ENCODE measurements at regions of chr18 and their contacts with region 1.

Region 1: GRCh38 chr18:41737218-41737617 is 217.8 kb upstream of the PIK3C3 start:
- DNase-seq: no peak
- H3K4me3 ChIP-seq: no peak overlapping the region
- H3K27ac ChIP-seq: no peak overlapping the region
- H3K4me1 ChIP-seq: peaks cover 7% of the 10 kb centered on the region
- H3K27me3 ChIP-seq: no peaks in the 10 kb centered on the region
- CTCF ChIP-seq: no peak

Region 2: DNA sequence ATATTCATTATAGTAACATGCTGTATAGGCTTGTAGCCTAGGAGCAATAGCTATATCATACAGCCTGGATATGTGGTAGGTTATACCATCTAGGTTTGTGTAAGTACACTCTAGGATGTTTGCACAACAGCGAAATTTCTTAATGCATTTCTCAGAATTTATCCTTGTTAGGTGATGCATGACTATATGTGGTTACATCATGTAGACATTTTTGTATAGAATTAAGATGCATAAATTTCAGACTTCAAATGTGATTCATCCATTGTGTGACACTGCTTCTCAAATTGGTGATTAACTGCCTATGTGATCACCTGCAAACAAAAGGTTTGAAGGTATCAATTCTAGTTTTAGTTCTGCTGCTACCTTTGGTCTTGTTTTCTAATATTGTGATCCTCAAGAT is 1569.2 kb before region 1 on chr18:
- CTCF ChIA-PET with region 1: interaction called, 14 read pairs
- POLR2A ChIA-PET with region 1: no interaction called
- intact Hi-C with region 1: no loop called
- DNase-seq: no peak
- H3K4me3 ChIP-seq: no peak overlapping the region
- H3K27ac ChIP-seq: no peak overlapping the region
- H3K4me1 ChIP-seq: no peaks in the 10 kb centered on the region
- H3K27me3 ChIP-seq: no peaks in the 10 kb centered on the region
- CTCF ChIP-seq: no peak

Measured in PC-9 (cell line).